IMR-90 (cell line): ENCODE measurements at regions of chr1 and their contacts with region 1.

Region 1: GRCh38 chr1:70311369-70311768 is 43.2 kb downstream of the ANKRD13C start:
- DNase-seq: no peak
- ATAC-seq: no peak
- H3K4me3 ChIP-seq: no peak overlapping the region
- H3K27ac ChIP-seq: no peak overlapping the region
- H3K4me1 ChIP-seq: no peaks in the 10 kb centered on the region
- H3K27me3 ChIP-seq: no peaks in the 10 kb centered on the region
- CTCF ChIP-seq: no peak
- POLR2A ChIP-seq: no peak
- RAD21 ChIP-seq: no peak

Region 2: GRCh38 chr1:70025846-70026245 is 285.5 kb before region 1 on chr1:
- CTCF ChIA-PET with region 1: no interaction called
- POLR2A ChIA-PET with region 1: no interaction called
- dilution Hi-C with region 1: no loop called
- in situ Hi-C with region 1: no loop called
- intact Hi-C with region 1: loop called (anchors 5 kb)
- DNase-seq: no peak
- ATAC-seq: no peak
- H3K4me3 ChIP-seq: no peak overlapping the region
- H3K27ac ChIP-seq: no peak overlapping the region
- H3K4me1 ChIP-seq: no peaks in the 10 kb centered on the region
- H3K27me3 ChIP-seq: no peaks in the 10 kb centered on the region; the same call in 1 of the 2 replicates
- CTCF ChIP-seq: no peak
- POLR2A ChIP-seq: no peak
- RAD21 ChIP-seq: no peak